ENCODE measurements at regions of chr7 and their contacts with region 1.

Region 1: DNA sequence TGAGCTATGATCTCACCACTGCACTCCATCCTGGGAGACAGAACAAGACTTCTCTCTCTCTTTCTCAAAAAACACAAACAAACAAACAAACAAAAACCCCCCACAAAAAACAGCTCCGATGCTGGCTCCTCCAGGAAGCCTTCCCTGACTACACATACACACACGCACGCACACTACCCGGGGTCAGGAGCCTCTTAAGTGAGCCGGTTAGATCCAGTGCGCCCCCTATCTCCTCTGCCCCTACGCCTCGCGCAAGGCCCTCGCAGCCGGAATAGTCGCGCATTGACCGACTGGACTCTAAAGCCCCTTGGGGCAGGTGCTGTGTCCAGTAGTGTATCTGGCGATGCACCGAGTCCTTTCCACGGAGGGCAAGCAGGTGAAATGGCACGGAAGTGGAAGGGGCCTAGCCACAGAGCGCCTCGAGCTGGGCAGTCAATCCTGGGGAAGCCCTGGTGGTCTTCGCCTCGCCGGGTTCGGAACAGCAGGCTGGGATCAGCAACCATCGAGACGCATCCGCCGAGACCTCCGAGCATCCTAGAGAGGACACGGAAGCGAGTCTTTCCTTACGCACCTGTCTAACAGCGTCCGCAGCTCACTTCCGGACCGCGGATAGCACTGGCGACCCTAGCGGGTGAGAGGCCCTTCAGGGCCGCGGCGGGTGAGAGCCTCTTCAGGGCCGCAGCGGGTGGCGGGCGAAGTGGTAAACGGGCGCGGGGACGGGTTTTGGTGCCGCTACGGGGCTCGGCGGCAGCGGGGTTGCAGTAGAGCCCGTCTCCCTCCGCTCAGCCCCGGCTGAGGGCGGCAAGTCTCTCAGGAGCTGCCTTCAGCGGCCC is at the start of gene ZSCAN25:
- DNase-seq: peak; percentile 73 to 93 (median 83)
- ATAC-seq: peak; percentile 94
- H3K4me3 ChIP-seq: peak within 1 kb of the TSS; percentile 96
- H3K4me3 Mint-ChIP-seq: peak within 1 kb of the TSS; percentile 99
- H3K27ac ChIP-seq: peak within 1 kb of the TSS; percentile 78 to 80
- H3K27ac Mint-ChIP-seq: peak within 1 kb of the TSS; percentile 92
- H3K4me1 ChIP-seq: peaks cover 20% of the 10 kb centered on the region
- H3K4me1 Mint-ChIP-seq: peaks cover 44% of the 10 kb centered on the region
- H3K27me3 ChIP-seq: no peaks in the 10 kb centered on the region
- H3K27me3 Mint-ChIP-seq: no peaks in the 10 kb centered on the region
- CTCF ChIP-seq: no peak
- total RNA-seq, gene ZSCAN25: 41.5 to 44.2 TPM

Region 2: DNA sequence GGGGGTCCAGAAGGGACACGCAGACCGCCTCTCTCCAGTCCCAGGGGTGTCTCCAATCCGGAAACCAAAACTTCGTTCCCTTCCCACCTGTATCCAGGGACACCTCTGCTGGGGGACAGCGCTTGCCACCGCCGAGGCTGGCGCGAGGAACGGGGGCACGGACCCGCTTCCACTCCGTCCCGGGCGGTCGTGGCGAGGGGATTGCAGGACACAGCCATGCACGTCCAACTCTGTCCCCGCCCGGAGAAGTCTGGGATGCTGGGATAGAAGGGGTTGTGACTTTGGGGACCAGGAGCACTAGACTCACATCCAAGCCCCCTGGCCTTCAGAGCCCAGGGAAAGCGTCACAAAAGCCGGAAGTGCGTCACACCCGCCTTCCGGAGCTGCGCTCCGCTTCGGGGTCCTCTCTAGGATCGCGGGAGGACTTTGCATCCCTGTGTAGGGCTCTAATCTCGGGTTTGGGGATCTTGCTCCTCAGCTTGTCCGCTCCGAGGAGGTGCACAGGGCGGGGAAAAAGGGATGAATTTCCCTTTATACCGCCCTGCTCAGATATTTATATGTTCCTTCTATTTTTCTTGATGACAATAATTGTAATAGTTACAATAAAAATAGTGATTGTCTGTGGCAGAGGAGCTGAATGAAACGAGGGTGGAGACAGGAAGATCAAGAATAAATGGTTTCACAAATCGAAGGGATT is 64.7 kb before region 1 on chr7 and contains the start of gene FAM200A:
- CTCF ChIA-PET with region 1: no interaction called
- POLR2A ChIA-PET with region 1: interaction called, 36 read pairs
- intact Hi-C with region 1: loop called (anchors 1 to 5 kb)
- DNase-seq: peak; percentile 70 to 95 (median 80)
- ATAC-seq: peak; percentile 98
- H3K4me3 ChIP-seq: peak within 1 kb of the TSS; percentile 97
- H3K4me3 Mint-ChIP-seq: peak within 1 kb of the TSS; percentile 92
- H3K27ac ChIP-seq: peak within 1 kb of the TSS; percentile 86 to 92
- H3K27ac Mint-ChIP-seq: peak within 1 kb of the TSS; percentile 80
- H3K4me1 ChIP-seq: peaks cover 33% of the 10 kb centered on the region
- H3K4me1 Mint-ChIP-seq: peaks cover 56% of the 10 kb centered on the region
- H3K27me3 ChIP-seq: no peaks in the 10 kb centered on the region
- H3K27me3 Mint-ChIP-seq: no peaks in the 10 kb centered on the region
- CTCF ChIP-seq: no peak
- total RNA-seq, gene FAM200A: 1.5 to 1.8 TPM

Region 3: GRCh38 chr7:100837099-100837836 is 1220.7 kb after region 1 on chr7:
- CTCF ChIA-PET with region 1: no interaction called
- POLR2A ChIA-PET with region 1: no interaction called
- intact Hi-C with region 1: loop called in 1 of 2 experiments (anchors 10 kb)
- DNase-seq: peak; percentile 56 to 87 (median 76)
- ATAC-seq: peak; percentile 99
- H3K4me3 ChIP-seq: peak overlapping the region; percentile 61
- H3K4me3 Mint-ChIP-seq: peak overlapping the region; percentile 85
- H3K27ac ChIP-seq: peak overlapping the region in 1 of 2 donors; percentile 10
- H3K27ac Mint-ChIP-seq: peak overlapping the region; percentile 76
- H3K4me1 ChIP-seq: peaks cover 16% of the 10 kb centered on the region
- H3K4me1 Mint-ChIP-seq: peaks cover 10% of the 10 kb centered on the region
- H3K27me3 ChIP-seq: no peaks in the 10 kb centered on the region
- H3K27me3 Mint-ChIP-seq: no peaks in the 10 kb centered on the region
- CTCF ChIP-seq: no peak

Measured in CD4-positive, alpha-beta T cell (primary cell).